PC-9 (cell line): ENCODE measurements at regions of chr13 and their contacts with region 1.

Region 1: DNA sequence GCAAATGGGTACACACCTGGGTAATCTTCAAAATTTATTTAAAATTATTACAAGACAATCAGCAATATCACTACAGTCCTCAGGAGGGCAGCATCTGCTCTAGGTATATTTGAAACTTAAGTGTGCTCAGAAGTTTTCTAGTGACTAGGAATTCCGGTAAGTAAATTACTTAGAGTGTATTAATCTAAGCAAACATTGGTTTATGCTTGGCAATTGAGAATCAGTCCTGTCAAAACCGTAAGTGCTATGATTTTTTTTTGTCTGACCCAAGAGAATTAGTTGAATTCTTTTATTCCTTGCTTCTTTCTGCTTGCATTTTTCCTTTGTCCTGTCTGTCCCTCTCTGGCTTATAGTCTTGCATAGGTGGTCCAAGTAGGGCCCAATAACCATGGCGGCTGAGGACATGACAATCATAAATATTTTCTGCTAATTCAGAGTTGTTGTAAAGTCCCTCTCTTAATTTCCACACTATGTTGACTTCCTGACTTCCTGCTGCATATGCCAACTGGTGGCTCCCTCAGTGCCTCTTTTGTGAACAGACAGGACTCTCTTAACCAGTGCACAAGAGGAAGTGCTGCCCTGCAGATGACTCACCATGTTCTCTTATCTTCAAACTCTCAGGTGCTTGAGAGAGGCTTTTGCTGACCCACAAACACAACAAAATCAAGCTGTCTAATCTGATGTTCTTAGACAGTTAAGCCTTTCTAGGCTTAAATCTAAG is 82.2 kb downstream of the SLAIN1 start:
- DNase-seq: peak; percentile 16 to 55
- H3K4me3 ChIP-seq: no peak overlapping the region
- H3K27ac ChIP-seq: no peak overlapping the region
- H3K4me1 ChIP-seq: no peaks in the 10 kb centered on the region
- H3K27me3 ChIP-seq: no peaks in the 10 kb centered on the region
- CTCF ChIP-seq: peak; percentile 81

Region 2: DNA sequence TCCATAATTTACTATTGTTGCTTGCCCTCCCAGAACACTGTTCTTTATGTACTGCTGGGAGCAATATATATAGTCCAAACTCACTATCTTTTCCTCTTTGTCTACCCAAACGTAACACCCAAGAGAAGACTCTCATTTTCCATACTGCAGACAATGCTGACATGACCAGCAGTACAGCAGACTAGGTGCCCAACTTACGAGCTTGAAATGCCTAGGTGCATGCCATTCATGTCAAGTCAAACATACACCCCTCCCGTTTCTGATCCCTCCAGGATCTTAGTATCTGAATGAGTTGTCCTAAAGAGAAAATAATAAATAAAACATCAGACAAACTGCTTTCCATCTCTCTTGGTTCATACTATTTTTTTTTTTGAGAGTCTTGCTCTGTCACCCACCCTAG is 1218.9 kb before region 1 on chr13:
- CTCF ChIA-PET with region 1: no interaction called
- POLR2A ChIA-PET with region 1: no interaction called
- intact Hi-C with region 1: no loop called
- DNase-seq: no peak
- H3K4me3 ChIP-seq: no peak overlapping the region
- H3K27ac ChIP-seq: no peak overlapping the region
- H3K4me1 ChIP-seq: no peaks in the 10 kb centered on the region
- H3K27me3 ChIP-seq: no peaks in the 10 kb centered on the region
- CTCF ChIP-seq: no peak

Region 3: DNA sequence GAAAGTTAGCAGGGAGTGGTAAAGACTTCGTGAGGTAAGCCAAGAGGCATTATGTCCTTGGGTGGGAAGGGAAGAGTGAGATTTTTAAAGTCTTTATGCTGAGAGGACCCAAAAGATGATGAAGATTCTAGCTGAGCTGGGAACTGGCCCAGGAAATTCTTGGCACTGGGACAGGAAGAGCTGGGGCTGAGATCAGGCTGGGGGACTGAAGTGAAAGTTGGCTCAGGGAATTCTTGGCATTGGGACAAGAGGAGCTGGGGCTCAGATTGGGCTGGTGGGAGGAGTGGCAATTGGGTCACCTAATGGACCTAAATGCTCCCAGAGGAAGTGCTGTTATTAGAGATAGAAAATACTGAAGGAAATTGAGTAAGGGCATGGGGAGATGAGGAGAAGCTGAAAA is 235.4 kb before region 1 on chr13:
- CTCF ChIA-PET with region 1: no interaction called
- POLR2A ChIA-PET with region 1: interaction called, 19 read pairs
- intact Hi-C with region 1: no loop called
- DNase-seq: no peak
- H3K4me3 ChIP-seq: no peak overlapping the region
- H3K27ac ChIP-seq: peak overlapping the region; percentile 3; the same call in 1 of the 2 replicates
- H3K4me1 ChIP-seq: peaks cover 11% of the 10 kb centered on the region
- H3K27me3 ChIP-seq: no peaks in the 10 kb centered on the region
- CTCF ChIP-seq: no peak

Region 4: DNA sequence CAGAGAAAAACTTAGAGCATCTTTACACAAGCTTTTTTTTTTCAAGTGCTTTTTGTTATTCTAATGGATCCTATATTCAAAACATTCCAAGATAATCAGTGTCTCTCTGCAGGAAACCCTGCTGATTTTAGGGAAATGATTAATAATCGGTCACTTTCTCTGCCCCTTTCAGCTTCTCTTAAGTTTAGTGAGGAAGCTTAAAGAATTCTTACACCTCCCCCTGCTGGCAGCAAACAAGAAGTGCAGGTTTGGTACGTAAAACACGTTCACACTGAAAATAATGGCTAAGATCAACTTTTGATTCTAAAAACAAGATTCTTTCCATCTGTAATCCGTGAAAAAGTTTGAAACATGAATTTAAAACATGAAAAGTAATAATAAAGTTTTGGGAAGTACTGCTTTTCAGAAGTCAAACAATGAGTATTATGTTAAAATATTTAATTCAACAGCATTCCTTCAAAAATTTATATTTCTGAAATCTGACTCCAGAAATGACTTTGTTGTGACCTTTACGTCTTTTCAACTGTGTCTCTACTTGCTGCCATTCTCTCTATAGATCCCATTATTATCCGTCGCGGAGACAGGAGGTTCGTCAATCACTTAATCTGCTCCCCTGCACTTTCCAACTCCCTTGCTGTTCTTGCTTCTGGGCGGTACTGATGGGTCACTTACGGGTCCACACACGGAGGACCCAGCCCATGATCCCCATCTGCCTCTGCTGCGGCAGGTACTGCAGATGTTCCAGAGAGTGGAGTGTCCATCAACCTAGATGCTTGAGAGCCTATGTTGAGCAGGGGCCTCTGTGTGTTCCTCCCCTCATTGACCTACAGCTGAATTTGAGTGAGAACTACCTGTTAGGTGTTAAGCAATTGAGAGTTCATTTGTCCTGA is 342.0 kb after region 1 on chr13:
- CTCF ChIA-PET with region 1: interaction called, 4 read pairs
- POLR2A ChIA-PET with region 1: no interaction called
- intact Hi-C with region 1: loop called (anchors 1 kb)
- DNase-seq: no peak
- H3K4me3 ChIP-seq: no peak overlapping the region
- H3K27ac ChIP-seq: no peak overlapping the region
- H3K4me1 ChIP-seq: no peaks in the 10 kb centered on the region
- H3K27me3 ChIP-seq: no peaks in the 10 kb centered on the region
- CTCF ChIP-seq: peak; percentile 92

Region 5: GRCh38 chr13:78420814-78421213 is 641.1 kb after region 1 on chr13:
- CTCF ChIA-PET with region 1: no interaction called
- POLR2A ChIA-PET with region 1: no interaction called
- intact Hi-C with region 1: no loop called
- DNase-seq: no peak
- H3K4me3 ChIP-seq: no peak overlapping the region
- H3K27ac ChIP-seq: no peak overlapping the region
- H3K4me1 ChIP-seq: no peaks in the 10 kb centered on the region
- H3K27me3 ChIP-seq: no peaks in the 10 kb centered on the region
- CTCF ChIP-seq: no peak